MCF 10A (cell line): ENCODE measurements at regions of chr18 and their contacts with region 1.

Region 1: GRCh38 chr18:58768293-58768974 is 96.2 kb upstream of the ZNF532 start:
- DNase-seq: peak; percentile 91
- H3K4me3 Mint-ChIP-seq: peak overlapping the region; percentile 64
- H3K27ac Mint-ChIP-seq: no peak overlapping the region
- H3K4me1 Mint-ChIP-seq: peaks cover 10% of the 10 kb centered on the region
- H3K27me3 Mint-ChIP-seq: peaks cover 27% of the 10 kb centered on the region
- CTCF ChIP-seq: peak; percentile 84

Region 2: DNA sequence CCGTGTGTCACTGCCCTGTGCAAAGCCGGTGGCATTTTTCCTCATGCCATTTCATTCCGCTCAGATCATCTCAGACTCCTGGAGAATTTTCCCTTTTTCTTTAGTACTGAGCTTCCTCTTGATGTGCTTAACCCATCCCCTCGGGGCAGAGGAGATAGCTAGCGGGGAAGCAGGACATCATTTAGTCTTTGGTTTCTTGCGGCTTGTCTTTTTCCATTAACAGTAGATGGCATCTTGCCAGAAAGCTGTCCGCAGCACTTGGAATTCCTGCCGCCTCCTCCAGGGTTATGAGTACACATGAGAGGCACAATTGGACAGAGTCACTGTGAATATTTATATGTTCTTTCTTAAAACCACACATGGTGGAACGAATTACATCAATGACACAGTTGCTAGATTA is 366.2 kb before region 1 on chr18:
- CTCF ChIA-PET with region 1: interaction called, 4 read pairs
- POLR2A ChIA-PET with region 1: no interaction called
- intact Hi-C with region 1: loop called (anchors 1 kb)
- DNase-seq: peak; percentile 43
- H3K4me3 Mint-ChIP-seq: no peak overlapping the region
- H3K27ac Mint-ChIP-seq: no peak overlapping the region
- H3K4me1 Mint-ChIP-seq: no peaks in the 10 kb centered on the region
- H3K27me3 Mint-ChIP-seq: no peaks in the 10 kb centered on the region
- CTCF ChIP-seq: no peak

Region 3: DNA sequence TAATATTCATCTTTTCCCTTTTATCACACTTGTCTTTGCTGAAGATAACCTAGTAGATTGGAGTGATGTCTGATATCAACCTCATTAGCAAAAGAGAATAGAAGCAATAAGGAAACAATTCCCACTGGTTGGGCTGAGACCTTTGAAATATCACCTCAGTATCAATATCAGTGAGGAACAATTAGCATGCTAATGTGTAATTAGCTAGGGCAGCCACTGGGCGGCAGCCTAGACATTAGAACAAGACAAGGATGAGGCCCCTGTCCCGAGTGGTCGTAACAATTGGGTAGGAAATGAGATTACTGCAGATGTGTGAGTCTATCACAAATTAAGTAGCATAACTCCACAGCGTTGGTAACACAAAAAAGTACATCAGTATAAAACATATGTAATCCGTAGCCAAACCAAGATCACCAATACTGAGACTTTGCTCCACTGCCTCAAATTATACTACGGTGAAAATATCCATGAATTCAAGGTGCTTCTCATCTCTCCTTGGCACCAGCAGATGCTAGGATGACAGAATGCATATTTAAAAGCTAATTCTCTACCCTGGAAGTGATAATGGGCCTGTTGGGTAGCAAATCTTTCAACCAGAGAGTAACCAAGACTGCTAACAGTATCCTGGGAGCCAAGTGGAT is 238.6 kb before region 1 on chr18:
- CTCF ChIA-PET with region 1: interaction called, 217 read pairs
- POLR2A ChIA-PET with region 1: interaction called, 8 read pairs
- intact Hi-C with region 1: loop called (anchors 1 kb)
- DNase-seq: peak; percentile 70
- H3K4me3 Mint-ChIP-seq: no peak overlapping the region
- H3K27ac Mint-ChIP-seq: no peak overlapping the region
- H3K4me1 Mint-ChIP-seq: no peaks in the 10 kb centered on the region
- H3K27me3 Mint-ChIP-seq: no peaks in the 10 kb centered on the region
- CTCF ChIP-seq: peak; percentile 91

Region 4: GRCh38 chr18:58781627-58782194 is 13.3 kb after region 1 on chr18:
- CTCF ChIA-PET with region 1: interaction called, 60 read pairs
- POLR2A ChIA-PET with region 1: interaction called, 4 read pairs
- intact Hi-C with region 1: no loop called
- DNase-seq: peak; percentile 84
- H3K4me3 Mint-ChIP-seq: no peak overlapping the region
- H3K27ac Mint-ChIP-seq: no peak overlapping the region
- H3K4me1 Mint-ChIP-seq: peaks cover 24% of the 10 kb centered on the region
- H3K27me3 Mint-ChIP-seq: no peaks in the 10 kb centered on the region
- CTCF ChIP-seq: peak; percentile 87

Region 5: DNA sequence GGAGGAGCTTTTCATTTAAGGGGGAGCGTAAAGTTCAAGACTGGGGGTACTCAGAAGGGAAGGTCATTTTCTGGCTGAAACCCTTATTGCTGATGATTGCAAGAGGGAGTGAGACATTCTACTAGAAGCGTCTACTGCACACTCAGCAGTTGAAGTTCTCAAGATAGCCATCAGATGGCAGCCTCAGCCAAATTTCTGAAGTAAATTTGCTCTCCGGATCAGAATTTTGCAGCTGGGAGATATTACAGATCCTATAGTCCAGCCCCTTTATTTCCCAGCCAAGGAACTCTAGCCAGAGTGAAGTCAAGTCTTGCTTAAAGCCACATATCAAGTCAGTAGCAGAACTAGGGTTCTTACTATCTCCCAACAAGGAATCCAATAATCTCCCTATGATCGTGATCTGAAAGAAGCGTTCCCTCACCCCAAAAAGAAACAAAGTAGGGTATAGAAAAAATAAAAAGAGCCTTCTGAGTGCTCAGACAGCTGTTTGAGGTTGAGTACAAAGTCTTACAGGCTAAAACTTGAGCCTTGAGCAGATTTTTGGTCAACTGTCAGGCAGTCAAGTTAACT is 480.9 kb after region 1 on chr18:
- CTCF ChIA-PET with region 1: interaction called, 4 read pairs
- POLR2A ChIA-PET with region 1: no interaction called
- intact Hi-C with region 1: loop called (anchors 1 kb)
- DNase-seq: peak; percentile 60
- H3K4me3 Mint-ChIP-seq: no peak overlapping the region
- H3K27ac Mint-ChIP-seq: no peak overlapping the region
- H3K4me1 Mint-ChIP-seq: no peaks in the 10 kb centered on the region
- H3K27me3 Mint-ChIP-seq: peaks cover 76% of the 10 kb centered on the region
- CTCF ChIP-seq: peak; percentile 93